ENCODE measurements at regions of chr2 and their contacts with region 1.

Region 1: DNA sequence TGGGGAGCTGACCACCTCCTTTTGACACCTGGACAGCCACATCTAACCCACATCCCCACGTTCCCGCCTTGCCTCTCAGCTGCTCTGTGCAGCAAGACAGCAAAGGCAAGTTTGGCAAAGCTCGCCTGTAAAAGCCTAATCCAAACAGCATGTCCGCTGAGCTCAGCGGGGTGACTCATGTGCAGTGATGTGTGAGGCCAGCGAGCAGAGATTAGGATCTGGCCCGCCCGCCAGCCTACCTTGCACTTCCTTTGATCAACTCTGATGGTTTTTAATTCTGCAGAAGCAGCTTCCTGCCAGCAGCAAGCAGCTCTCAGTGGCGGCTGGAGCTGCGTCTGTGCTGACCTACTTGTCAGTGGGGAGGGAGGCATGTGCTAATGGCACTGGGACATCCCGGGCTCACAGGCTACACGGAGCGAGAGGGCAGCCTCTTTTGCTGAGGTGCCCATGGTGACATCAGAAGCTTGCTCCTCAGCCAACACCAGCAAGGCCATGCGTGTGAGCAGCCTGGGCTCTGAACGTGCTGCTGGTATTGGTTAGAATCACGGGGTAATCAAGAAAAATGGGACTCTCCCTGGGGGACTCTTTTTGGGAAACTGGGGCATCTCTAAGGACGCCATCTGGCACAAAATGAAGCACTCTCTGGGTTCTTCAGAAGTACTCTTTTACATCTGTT is 36.0 kb upstream of the EML4 start:
- DNase-seq: peak; percentile 98
- ATAC-seq: peak; percentile 87
- H3K4me3 ChIP-seq: peak overlapping the region in 2 of 3 experiments; percentile 11 to 53; a peak in 3 of 6 replicates
- H3K27ac ChIP-seq: peak overlapping the region; percentile 86
- H3K4me1 ChIP-seq: peaks cover 100% of the 10 kb centered on the region
- H3K27me3 ChIP-seq: no peaks in the 10 kb centered on the region
- CTCF ChIP-seq: peak; percentile 19; the same call in 1 of the 2 replicates
- EP300 ChIP-seq: peak; percentile 23 to 95; a peak in 2 of 4 replicates
- POLR2A ChIP-seq: peak; percentile 85 to 88
- RAD21 ChIP-seq: no peak; the same call in 1 of the 2 replicates

Region 2: GRCh38 chr2:42105330-42106256 is 27.5 kb before region 1 on chr2:
- CTCF ChIA-PET with region 1: no interaction called
- POLR2A ChIA-PET with region 1: interaction called, 110 read pairs
- in situ Hi-C with region 1: no loop called
- intact Hi-C with region 1: no loop called
- DNase-seq: peak; percentile 88
- ATAC-seq: peak; percentile 74
- H3K4me3 ChIP-seq: no peak overlapping the region
- H3K27ac ChIP-seq: peak overlapping the region; percentile 76
- H3K4me1 ChIP-seq: peaks cover 92% of the 10 kb centered on the region
- H3K27me3 ChIP-seq: no peaks in the 10 kb centered on the region
- CTCF ChIP-seq: no peak
- EP300 ChIP-seq: peak in 1 of 2 experiments; percentile 97; a peak in 2 of 4 replicates
- POLR2A ChIP-seq: peak in 1 of 2 experiments; percentile 25; a peak in 1 of 4 replicates
- RAD21 ChIP-seq: no peak

Region 3: DNA sequence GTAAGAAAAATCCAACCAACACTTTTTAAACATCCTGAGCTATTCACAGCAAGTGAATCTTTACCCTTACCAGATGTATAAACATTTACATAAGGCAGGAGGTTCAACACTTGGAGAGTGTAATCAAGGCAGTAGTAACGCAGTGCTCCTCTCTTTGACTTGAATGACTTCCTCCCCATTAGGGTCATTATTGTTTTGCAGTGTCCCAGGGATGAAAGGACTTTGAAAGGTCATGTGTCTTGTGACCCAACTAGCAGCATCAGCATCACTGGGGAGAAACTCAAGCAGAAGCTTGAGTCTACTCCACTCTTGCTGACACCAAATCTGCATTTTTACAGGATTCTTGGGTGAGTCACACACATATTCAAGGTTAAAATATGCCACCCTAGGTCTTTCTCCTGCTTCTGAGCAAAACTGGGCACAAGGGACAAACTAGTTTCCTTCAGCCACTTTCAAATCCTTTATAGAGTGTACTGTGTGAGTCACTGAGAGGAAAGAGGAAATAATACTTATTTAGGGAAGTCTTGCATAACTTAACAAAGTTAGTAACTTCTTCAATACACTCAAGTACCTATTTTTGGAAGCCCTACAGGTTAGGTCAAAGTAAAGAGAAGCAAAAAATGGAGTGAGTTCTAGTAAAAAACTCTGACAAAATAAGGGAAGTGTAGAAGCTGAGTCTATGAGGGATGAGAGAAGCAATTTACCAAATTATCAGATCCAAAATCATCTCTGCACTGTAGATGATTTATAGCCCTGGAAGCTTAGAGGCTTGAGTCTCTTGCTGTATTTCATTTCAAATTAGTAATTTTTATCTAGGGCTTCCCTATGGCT is 15.0 kb before region 1 on chr2:
- CTCF ChIA-PET with region 1: no interaction called
- POLR2A ChIA-PET with region 1: interaction called, 100 read pairs
- in situ Hi-C with region 1: no loop called
- intact Hi-C with region 1: loop called (anchors 2 kb)
- DNase-seq: peak; percentile 91
- ATAC-seq: peak; percentile 70
- H3K4me3 ChIP-seq: peak overlapping the region in 2 of 3 experiments; percentile 35 to 37; a peak in 2 of 6 replicates
- H3K27ac ChIP-seq: peak overlapping the region; percentile 71
- H3K4me1 ChIP-seq: peaks cover 74% of the 10 kb centered on the region
- H3K27me3 ChIP-seq: no peaks in the 10 kb centered on the region
- CTCF ChIP-seq: no peak
- EP300 ChIP-seq: peak in 1 of 2 experiments; percentile 95; a peak in 2 of 4 replicates
- POLR2A ChIP-seq: 0 out of 4 replicates have a peak, but pooled peaks of 1 of the 2 experiments have one; percentile 17
- RAD21 ChIP-seq: no peak

Region 4: DNA sequence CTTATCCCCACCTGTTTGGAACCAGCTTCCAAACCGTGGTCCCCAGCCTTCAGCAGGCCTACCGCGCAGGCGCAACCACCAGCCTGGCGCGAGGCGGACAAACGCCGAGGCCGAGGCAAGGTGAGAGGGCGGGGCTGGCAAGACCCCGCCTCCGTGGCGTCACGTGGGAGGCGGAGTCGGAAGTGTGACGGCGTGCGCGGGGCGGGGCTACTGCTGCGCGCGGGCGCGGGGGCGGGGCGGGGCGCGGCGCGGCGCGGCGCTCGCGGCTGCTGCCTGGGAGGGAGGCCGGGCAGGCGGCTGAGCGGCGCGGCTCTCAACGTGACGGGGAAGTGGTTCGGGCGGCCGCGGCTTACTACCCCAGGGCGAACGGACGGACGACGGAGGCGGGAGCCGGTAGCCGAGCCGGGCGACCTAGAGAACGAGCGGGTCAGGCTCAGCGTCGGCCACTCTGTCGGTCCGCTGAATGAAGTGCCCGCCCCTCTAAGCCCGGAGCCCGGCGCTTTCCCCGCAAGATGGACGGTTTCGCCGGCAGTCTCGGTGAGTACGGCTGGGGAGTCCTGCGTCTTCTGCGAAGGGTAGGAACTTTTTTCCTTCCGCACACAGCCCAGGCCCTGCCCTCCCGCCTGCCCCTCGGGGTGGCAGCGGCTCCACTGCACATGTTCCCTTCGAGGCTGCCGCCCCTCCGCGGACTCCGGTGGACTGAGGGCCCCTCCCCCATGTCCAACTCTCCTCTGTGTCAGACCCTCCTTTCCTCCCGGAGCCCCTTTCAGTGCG is 36.2 kb after region 1 on chr2 and contains the start of gene EML4:
- CTCF ChIA-PET with region 1: no interaction called
- POLR2A ChIA-PET with region 1: interaction called, 17 read pairs
- in situ Hi-C with region 1: loop called (anchors 5 kb)
- intact Hi-C with region 1: loop called (anchors 2 kb)
- DNase-seq: peak; percentile 82
- ATAC-seq: peak; percentile 90
- H3K4me3 ChIP-seq: peak within 1 kb of the TSS; percentile 95 to 98 (median 95)
- H3K27ac ChIP-seq: peak within 1 kb of the TSS; percentile 78
- H3K4me1 ChIP-seq: peaks cover 35% of the 10 kb centered on the region
- H3K27me3 ChIP-seq: no peaks in the 10 kb centered on the region; a peak in 1 of 5 replicates
- CTCF ChIP-seq: peak; percentile 10; the same call in 1 of the 2 replicates
- EP300 ChIP-seq: no peak
- POLR2A ChIP-seq: peak; percentile 75 to 88
- RAD21 ChIP-seq: peak; percentile 72
- total RNA-seq, gene EML4: 243 and 362 TPM in 2 replicates

Region 5: DNA sequence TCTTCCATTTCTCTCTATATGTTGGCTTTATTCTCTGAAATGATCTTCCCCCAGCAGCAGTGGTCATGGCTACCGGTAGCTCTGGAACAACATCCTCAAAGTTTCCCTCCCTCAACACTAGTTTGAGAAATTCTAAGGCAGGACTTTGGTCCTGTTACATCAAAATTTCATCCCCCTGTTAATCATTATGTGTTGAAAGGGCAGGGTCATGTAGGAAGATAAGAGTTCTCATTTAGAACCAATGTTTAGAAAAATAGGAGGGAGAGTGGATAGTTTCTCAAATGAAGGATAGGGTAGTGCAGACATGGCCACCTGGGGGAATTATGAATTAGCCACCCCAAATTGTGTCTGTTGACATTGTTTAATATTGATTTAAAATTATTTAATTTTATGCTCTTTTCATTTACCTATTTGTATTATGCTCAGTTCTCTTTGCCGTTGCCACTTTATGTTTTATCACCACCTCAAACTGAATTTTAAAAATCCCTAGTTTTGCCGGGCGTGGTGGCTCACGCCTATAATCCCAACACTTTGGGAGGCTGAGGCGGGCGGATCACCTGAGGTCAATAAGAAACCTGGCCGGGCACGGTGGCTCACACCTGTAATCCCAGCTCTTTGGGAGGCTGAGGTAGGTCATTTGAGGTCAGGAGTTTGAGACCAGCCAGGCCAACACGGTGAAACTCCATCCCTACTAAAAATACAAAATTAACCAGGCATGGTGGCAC is 58.3 kb after region 1 on chr2:
- CTCF ChIA-PET with region 1: no interaction called
- POLR2A ChIA-PET with region 1: interaction called, 35 read pairs
- in situ Hi-C with region 1: no loop called
- intact Hi-C with region 1: loop called (anchors 2 kb)
- DNase-seq: peak; percentile 99
- ATAC-seq: peak; percentile 87
- H3K4me3 ChIP-seq: peak overlapping the region in 2 of 3 experiments; percentile 25 to 43; a peak in 2 of 6 replicates
- H3K27ac ChIP-seq: peak overlapping the region; percentile 98
- H3K4me1 ChIP-seq: peaks cover 100% of the 10 kb centered on the region
- H3K27me3 ChIP-seq: no peaks in the 10 kb centered on the region
- CTCF ChIP-seq: no peak
- EP300 ChIP-seq: peak; percentile 80 to 99; a peak in 3 of 4 replicates
- POLR2A ChIP-seq: peak; percentile 59 to 66
- RAD21 ChIP-seq: peak; percentile 26; the same call in 1 of the 2 replicates

Region 6: DNA sequence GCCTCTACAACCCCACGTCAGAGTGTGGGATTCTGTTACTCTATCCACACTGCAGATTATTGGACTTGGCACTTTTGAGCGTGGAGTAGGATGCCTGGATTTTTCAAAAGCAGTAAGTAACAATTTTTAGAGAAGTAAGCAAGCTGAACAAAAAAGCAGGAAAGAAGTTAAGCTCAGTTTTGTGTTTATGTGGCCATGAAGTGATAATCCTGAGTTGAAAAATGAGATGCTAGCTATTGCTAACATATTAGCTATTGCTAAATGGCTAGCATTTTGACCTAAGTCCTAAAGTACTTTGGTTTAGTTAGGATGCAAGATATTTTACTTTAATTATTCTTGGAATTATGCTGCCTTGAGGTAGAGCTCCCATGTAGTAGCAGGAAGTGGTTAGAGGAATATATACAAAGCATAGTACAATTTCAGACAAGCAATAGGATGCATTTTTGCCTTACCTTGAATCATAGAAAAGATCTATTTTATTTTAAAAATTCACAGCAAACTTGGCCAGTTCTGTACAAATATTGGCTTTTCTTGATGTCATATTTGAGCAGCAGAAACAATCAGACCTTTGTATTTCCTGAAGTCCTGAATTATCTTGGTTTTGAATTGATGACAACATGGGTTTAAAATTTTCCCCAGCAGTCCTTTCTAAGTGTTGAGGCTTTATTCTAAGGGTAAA is 153.3 kb after region 1 on chr2:
- CTCF ChIA-PET with region 1: no interaction called
- POLR2A ChIA-PET with region 1: no interaction called
- in situ Hi-C with region 1: no loop called
- intact Hi-C with region 1: loop called (anchors 1 kb)
- DNase-seq: peak; percentile 82
- ATAC-seq: peak; percentile 47
- H3K4me3 ChIP-seq: no peak overlapping the region
- H3K27ac ChIP-seq: peak overlapping the region; percentile 70
- H3K4me1 ChIP-seq: peaks cover 58% of the 10 kb centered on the region
- H3K27me3 ChIP-seq: no peaks in the 10 kb centered on the region
- CTCF ChIP-seq: no peak
- EP300 ChIP-seq: peak in 1 of 2 experiments; percentile 28; a peak in 1 of 4 replicates
- POLR2A ChIP-seq: no peak
- RAD21 ChIP-seq: peak; percentile 18; the same call in 1 of the 2 replicates

Measured in HepG2 (cell line).